ENCODE measurements at regions of chr22 and their contacts with region 1.

Region 1: GRCh38 chr22:45163451-45164269 is at the start of gene NUP50:
- DNase-seq: peak; percentile 99

Region 2: GRCh38 chr22:45007391-45008185 is 156.1 kb before region 1 on chr22:
- CTCF ChIA-PET with region 1: no interaction called
- POLR2A ChIA-PET with region 1: interaction called, 16 read pairs
- DNase-seq: peak; percentile 74

Region 3: GRCh38 chr22:45082795-45083194 is 80.9 kb before region 1 on chr22:
- CTCF ChIA-PET with region 1: no interaction called
- POLR2A ChIA-PET with region 1: no interaction called
- DNase-seq: peak; percentile 56

Region 4: GRCh38 chr22:45096256-45096907 is 67.3 kb before region 1 on chr22:
- CTCF ChIA-PET with region 1: interaction called, 4 read pairs
- POLR2A ChIA-PET with region 1: interaction called, 10 read pairs
- DNase-seq: peak; percentile 84

Region 5: GRCh38 chr22:45131749-45132148 is 31.9 kb before region 1 on chr22:
- CTCF ChIA-PET with region 1: no interaction called
- POLR2A ChIA-PET with region 1: no interaction called
- DNase-seq: no peak

Region 6: DNA sequence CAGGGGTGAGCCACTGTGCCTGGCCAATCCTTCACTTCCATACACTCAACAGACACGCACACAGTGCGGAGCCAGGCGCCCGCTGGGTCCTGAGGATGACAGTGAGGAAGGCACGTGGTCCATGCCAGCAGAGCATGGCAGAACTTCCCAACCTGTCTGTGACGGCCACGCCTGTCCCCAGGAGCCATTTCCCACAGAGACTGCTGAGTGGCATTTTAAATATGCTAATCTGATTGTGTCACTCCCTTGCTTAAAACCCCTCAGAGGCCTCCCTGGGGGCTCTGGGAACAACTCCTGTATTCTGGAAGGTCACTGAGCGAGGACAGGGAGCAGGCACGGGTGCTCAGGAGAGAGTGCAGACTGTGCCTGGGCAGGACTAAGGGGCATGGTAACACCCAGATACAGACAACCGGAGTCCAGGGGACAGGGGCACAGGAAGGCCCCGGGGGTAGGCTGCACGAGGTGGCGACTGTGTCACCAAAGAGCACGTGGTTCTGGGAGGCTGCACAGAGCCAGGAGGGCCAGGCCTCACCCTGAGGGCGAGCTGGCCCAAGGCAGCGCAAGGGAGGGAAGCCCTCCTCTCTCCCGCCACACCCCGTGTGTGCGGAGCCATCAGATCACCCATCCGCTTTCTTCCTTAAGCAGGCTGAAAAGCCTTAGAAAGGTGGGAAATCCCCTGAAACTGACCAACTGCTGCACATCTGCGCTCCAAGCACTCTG is 35.4 kb after region 1 on chr22:
- CTCF ChIA-PET with region 1: no interaction called
- POLR2A ChIA-PET with region 1: no interaction called
- DNase-seq: no peak

Measured in HEK293T (cell line).